Right cardiac atrium (tissue), 5 donors: ENCODE measurements at regions of chr16 and their contacts with region 1.

Region 1: DNA sequence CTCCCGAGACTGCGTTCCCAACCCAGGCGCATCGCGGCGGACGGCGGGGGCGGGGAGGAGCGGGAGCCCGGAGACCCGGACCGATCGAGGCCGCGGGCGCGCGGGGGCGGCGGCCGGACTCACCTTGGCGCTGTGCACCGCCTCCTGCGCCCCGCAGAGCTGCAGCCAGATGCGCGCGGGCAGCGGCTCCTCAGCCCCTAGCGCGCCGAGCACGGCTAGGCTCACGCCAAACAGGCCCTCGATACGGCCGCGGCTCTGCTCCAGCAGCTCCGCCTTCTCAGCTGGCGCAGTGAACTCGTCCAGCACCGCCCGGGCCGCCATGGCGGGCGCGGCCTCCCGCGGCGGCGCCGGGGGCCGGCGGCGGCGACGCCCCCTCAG is 339 bp downstream of the N4BP1 start:
- DNase-seq: peak; percentile 82 to 93 (median 93)
- ATAC-seq: peak; percentile 80 to 88
- H3K4me3 ChIP-seq: peak overlapping the region; percentile 73
- H3K27ac ChIP-seq: peak overlapping the region; percentile 61
- H3K4me1 ChIP-seq: peaks cover 22% of the 10 kb centered on the region
- H3K27me3 ChIP-seq: no peaks in the 10 kb centered on the region

Region 2: DNA sequence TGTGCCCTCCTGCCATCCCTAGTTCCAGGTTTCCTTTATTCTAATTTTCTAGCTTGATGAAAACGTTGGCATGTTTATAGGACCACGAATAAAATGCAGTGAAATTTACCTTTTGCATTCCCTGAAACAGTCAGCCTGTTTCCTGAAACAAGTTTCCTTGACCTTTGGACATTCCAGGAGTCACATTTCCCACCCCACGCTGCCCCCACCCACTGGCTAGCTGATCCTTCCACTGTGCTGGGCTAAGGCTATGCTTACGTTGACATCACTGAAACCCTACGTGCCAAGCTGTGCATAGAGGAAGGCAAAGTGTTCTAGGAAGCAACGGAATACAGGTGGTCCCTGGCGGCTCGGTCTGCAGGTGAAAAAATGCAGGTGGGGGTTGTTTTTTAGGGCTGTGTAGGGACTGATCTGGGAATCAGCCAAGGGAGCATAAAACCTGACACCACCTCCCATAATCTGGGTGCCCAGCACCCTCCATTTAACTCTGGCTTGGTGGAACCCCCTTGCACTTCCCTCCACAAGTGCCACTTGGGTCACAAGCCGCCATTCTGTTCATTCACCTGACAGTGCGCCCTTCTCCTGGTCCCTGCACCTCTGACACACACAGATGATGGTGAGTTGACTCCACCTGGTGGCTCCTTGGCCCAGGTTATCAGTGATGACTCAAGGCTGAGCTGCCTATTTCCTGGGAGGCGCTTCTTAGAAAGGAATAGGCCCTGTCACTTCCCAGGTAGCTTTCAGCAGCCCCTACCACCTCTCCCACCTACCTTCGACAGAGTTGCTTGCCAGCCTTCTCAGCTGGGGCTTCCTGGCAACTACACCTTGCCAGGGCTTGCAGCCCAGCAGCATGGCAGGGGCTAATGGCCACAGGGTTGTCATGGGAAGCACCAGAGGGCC is 83.3 kb before region 1 on chr16:
- intact Hi-C with region 1: no loop called
- DNase-seq: no peak
- ATAC-seq: no peak
- H3K4me3 ChIP-seq: no peak overlapping the region
- H3K27ac ChIP-seq: no peak overlapping the region
- H3K4me1 ChIP-seq: no peaks in the 10 kb centered on the region
- H3K27me3 ChIP-seq: no peaks in the 10 kb centered on the region

Region 3: GRCh38 chr16:48542020-48542473 is 67.6 kb before region 1 on chr16:
- intact Hi-C with region 1: loop called in 1 of 4 experiments (anchors 10 kb)
- DNase-seq: peak; percentile 75 to 88 (median 80)
- ATAC-seq: peak; percentile 78 to 86
- H3K4me3 ChIP-seq: no peak overlapping the region
- H3K27ac ChIP-seq: no peak overlapping the region
- H3K4me1 ChIP-seq: peaks cover 18% of the 10 kb centered on the region
- H3K27me3 ChIP-seq: no peaks in the 10 kb centered on the region

Region 4: DNA sequence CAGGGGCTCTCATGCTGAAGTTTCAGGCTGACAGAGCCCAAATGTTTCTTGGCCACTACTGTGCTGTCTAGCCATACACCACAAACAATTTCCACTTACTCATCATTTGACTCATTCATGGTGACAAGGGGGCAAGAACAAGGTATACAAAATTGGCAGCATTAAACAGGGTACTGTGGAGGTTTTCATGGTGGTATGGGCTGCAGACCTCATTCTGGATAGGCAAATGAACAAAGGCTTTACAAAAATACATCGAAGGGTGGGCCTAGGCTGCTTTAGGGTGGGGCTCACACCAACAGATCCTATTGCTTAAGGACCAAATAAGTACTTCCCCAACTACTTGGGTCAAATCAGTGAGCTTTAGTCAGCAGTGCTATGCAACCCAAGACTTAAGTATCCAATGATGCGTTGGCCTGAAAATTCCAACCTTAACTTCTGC is 52.7 kb before region 1 on chr16:
- intact Hi-C with region 1: loop called in 1 of 4 experiments (anchors 10 kb)
- DNase-seq: no peak
- ATAC-seq: peak; percentile 44 to 55
- H3K4me3 ChIP-seq: no peak overlapping the region
- H3K27ac ChIP-seq: no peak overlapping the region
- H3K4me1 ChIP-seq: peaks cover 14% of the 10 kb centered on the region
- H3K27me3 ChIP-seq: no peaks in the 10 kb centered on the region